CD14-positive monocyte (primary cell): ENCODE measurements at regions of chr17 and their contacts with region 1.

Region 1: DNA sequence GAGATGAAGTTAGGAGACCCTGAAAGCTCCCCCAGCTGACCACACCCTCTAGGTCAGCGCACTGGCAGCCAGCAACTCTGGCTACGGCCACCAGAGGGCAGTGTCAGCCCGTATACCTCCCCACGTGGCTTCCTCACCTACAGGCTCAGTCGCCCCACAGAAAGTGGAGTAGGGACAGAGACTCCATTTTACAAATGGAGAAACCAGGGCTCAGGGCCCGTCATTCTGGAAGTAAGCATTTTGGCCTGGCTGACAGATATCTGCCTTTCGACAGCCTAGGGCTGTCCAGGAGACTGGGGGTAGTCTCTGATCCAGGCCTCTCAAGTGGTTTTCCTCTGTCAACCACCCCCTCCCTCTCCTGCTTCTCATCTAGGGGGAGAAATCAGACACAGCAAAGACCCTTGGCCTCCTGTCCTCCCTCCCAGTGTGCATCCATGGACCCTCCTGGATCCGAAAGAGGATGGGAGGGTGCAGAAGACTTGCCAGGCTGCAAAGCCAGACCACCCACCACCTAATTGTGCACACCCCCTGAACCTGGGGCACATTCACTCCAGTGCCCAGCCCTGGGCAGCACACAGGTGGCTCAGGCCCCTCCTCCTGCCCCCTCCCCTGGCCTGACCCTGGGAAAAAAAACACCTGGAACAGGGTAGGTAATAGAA is 3.8 kb upstream of the HAP1 start:
- DNase-seq: peak; percentile 73 to 80 (median 77)
- H3K4me3 ChIP-seq: no peak overlapping the region
- H3K4me3 Mint-ChIP-seq: peak overlapping the region in 1 of 2 donors; percentile 48
- H3K27ac ChIP-seq: no peak overlapping the region
- H3K27ac Mint-ChIP-seq: no peak overlapping the region
- H3K4me1 ChIP-seq: peaks cover 6 to 8% of the 10 kb centered on the region in 2 donors
- H3K4me1 Mint-ChIP-seq: peaks cover 7% of the 10 kb centered on the region
- H3K27me3 ChIP-seq: peaks cover 19 to 39% of the 10 kb centered on the region in 2 donors
- H3K27me3 Mint-ChIP-seq: peaks cover 36 to 48% (median 47%) of the 10 kb centered on the region in 3 donors
- CTCF ChIP-seq: peak; percentile 97

Region 2: DNA sequence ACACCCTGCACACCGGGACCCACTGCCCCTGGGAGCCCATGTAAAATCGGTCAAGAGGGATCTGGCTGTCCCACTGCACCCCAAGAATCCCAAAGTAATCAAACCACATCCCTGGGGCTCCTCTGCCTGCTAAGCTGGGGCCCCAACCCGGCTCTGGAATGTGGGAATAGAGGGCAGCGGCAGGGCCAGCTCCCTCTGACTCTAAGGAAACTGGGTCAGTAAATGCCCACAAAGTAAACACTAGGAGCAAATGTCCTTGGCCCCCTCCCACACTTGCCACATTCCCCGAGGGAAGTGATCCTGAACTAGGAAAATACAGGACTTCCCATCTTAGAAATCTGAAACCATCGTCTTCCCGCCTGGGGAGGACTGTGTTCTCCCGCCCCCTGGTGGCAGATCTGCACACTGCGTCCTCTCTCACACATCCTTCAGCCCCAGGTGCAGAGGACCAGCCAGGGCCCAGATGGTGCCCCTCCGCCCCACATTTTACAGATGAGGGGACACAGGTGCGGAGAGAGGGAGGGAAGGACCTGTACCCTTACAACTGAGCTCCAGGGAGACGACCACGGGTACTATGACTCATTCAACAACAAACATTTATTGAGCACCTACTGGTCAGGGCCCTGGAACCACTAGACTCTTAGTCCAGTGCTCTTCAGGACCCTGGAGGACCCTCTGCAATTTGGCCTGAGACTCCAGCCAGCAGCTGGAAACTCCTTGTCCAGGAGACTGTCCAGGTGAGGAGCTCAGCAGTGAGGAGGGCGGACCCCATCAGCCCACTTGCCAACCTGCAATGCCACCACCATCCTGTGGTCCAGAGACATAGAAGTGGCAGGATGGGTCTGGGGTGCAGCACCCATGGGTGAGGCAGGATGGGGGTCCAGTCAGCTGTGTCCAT is 63.4 kb after region 1 on chr17:
- intact Hi-C with region 1: loop called (anchors 1 to 2 kb)
- DNase-seq: peak; percentile 50 to 69 (median 56)
- H3K4me3 ChIP-seq: no peak overlapping the region
- H3K4me3 Mint-ChIP-seq: no peak overlapping the region
- H3K27ac ChIP-seq: no peak overlapping the region
- H3K27ac Mint-ChIP-seq: no peak overlapping the region
- H3K4me1 ChIP-seq: peaks cover 5 to 8% of the 10 kb centered on the region in 2 donors
- H3K4me1 Mint-ChIP-seq: peaks cover 11% of the 10 kb centered on the region
- H3K27me3 ChIP-seq: no peaks in the 10 kb centered on the region
- H3K27me3 Mint-ChIP-seq: peaks cover 2 to 10% (median 7%) of the 10 kb centered on the region in 3 donors
- CTCF ChIP-seq: peak; percentile 97